ENCODE measurements at regions of chr13 and their contacts with region 1.

Region 1: GRCh38 chr13:31322026-31322425 is 122.3 kb downstream of the B3GLCT start:
- DNase-seq: no peak
- ATAC-seq: no peak
- H3K4me3 Mint-ChIP-seq: no peak overlapping the region
- H3K27ac Mint-ChIP-seq: peak overlapping the region; percentile 64
- H3K4me1 Mint-ChIP-seq: peaks cover 7% of the 10 kb centered on the region
- H3K27me3 Mint-ChIP-seq: no peaks in the 10 kb centered on the region
- CTCF ChIP-seq: no peak

Region 2: DNA sequence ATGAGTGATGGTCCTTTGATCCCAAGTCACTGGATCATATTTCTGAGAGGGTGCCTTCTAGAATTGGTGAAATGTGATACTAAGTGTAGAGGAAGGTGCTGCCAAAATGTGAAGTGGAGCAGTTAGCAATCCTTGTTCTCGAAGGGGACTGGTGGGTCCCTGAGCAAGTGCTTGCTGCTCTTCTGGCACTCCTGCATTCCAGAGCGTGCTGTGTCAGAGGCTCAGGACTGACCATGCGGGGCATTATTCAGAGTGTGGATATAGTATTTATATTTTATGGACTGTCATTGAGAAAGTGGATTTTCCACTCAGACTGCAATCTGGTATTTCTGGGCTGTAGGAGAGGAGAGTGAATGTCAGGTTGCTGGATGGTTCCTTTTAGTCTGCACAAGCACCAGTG is 1541.6 kb after region 1 on chr13:
- CTCF ChIA-PET with region 1: no interaction called
- POLR2A ChIA-PET with region 1: no interaction called
- intact Hi-C with region 1: loop called (anchors 5 kb)
- DNase-seq: no peak
- ATAC-seq: no peak
- H3K4me3 Mint-ChIP-seq: no peak overlapping the region
- H3K27ac Mint-ChIP-seq: no peak overlapping the region
- H3K4me1 Mint-ChIP-seq: no peaks in the 10 kb centered on the region
- H3K27me3 Mint-ChIP-seq: no peaks in the 10 kb centered on the region
- CTCF ChIP-seq: no peak